ENCODE measurements at regions of chr21 and their contacts with region 1.

Region 1: DNA sequence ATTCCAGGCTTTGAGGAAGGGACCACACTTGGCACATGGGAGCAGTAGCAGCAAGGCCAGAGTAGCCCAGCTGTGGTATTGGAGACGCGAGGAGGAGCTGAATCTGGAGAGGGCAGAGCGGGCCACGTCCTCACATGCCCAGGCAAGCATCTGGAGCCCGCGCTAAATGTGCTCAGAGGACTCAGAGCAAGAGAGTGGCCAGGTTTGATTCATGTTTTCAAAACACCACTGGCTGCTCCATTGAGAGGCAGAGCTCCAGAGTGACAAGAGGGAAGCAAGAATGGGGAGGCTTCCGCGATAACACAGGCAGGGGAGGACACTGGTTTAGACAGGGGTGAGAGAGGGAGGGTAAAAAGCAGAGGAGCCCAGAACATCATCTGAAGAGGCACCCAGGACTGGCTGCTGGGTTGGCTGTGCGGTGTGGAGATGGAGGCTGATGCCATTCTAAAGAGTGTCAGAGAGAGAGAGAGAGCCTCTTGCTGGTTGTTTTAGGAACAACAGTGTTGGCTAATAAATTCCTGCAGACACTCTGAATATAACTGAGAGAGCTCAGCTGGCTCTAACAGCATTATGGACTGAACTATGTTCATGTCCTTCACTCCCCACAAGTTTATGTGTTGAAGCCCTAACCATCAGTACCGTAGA is 32.3 kb downstream of the RCAN1 start:
- DNase-seq: peak; percentile 64
- CTCF ChIP-seq: peak; percentile 33

Region 2: GRCh38 chr21:34517491-34518245 is 65.0 kb before region 1 on chr21:
- CTCF ChIA-PET with region 1: interaction called, 11 read pairs
- POLR2A ChIA-PET with region 1: no interaction called
- DNase-seq: no peak
- CTCF ChIP-seq: peak; percentile 19

Region 3: GRCh38 chr21:34570313-34570712 is 12.3 kb before region 1 on chr21:
- CTCF ChIA-PET with region 1: interaction called, 14 read pairs
- POLR2A ChIA-PET with region 1: no interaction called
- DNase-seq: no peak
- CTCF ChIP-seq: no peak